AG04449 (cell line): ENCODE measurements at regions of chr2 and their contacts with region 1.

Region 1: DNA sequence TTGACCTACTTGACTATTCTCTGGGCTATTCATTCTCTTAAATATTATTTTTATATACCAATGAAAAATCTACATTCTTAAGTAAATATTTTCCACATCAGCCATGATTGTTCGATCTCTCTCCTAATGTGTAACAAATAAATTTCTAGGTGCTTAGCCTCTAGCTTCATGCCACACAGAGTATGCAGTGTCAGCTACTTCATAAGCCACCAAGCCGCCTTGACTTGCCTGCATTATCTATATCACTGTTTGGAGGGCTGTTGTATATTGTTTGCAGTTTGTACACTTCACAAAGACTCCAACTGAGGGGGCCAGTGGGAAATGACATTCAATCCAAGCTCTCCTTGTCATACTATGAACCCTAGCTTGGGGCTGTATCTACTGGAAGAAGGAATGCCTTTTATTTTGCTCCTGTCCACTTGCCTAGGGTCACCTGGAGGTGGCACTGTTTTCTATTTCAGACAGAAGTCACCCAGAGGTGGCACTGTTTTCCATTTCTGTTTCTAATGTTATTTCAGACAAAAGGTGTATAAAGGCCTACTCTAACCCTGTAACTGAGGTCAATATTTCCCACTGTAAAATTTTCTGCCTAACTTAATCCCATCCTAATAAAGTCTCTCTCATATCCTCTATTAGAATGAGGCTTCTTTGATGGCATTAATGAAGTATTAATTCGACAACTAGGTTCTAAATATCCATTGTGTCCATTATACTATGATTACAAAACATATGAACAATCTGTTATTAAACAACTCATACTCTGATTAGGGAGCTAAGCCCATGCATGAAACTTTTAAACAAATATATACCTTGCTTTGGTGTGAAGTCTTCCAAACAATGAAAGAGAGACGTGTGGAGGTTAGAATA is 36.4 kb downstream of the COL5A2 start:
- DNase-seq: no peak
- H3K4me3 ChIP-seq: no peak overlapping the region
- CTCF ChIP-seq: peak; percentile 17

Region 2: DNA sequence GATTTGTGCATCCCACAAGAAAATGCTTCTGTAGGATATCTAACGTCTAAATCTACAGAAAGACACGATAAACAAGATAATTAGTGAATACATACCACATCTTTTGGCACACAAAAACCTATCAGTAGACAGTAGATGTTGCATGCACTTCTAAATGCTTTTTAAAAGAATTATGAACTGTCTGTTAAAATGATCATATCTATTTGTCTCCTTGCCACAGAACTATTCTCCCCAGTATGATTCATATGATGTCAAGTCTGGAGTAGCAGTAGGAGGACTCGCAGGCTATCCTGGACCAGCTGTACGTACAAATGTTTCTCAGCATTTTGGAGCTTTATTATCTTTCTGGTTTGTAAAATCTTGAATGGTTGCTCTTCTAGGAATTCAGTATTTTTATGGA is 156.3 kb before region 1 on chr2:
- CTCF ChIA-PET with region 1: no interaction called
- POLR2A ChIA-PET with region 1: no interaction called
- DNase-seq: no peak
- H3K4me3 ChIP-seq: no peak overlapping the region
- CTCF ChIP-seq: no peak

Region 3: DNA sequence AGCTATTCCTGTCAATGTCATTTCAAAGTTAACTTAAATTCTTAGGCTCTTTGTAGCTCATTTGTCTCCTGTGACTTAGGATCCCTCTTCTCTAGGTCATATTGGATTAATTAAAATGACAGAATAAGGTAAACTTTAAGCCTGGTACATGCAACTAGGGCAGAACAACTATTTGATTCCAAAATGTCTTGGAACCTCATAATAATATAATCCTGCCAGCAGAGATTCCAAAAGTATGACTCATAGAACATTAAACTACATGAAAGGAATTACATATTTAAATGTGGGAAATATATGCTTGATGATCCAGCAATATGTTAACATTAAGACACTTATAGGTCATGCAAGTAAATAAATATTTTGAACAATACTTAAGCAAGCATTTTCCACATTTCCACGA is 105.6 kb before region 1 on chr2:
- CTCF ChIA-PET with region 1: no interaction called
- POLR2A ChIA-PET with region 1: no interaction called
- DNase-seq: no peak
- H3K4me3 ChIP-seq: no peak overlapping the region
- CTCF ChIP-seq: no peak

Region 4: DNA sequence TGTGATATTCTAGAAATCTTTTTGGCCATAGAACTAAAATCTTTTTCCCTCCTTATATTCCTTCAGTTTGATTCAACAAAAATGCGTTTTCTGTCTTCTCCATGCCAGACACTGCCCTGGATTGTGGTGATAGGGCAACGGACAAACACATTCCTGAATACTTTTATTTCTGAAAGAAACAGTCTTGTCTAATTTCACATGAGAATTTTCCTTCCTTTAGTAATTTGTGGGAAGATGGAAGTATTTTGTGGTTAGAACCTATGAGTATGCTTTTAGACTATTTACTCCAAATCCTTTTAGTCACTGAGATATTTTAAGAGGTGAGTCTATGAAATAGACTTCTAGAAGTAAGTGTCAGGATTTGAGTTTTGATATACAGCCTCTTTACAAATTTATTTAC is 13.2 kb before region 1 on chr2:
- CTCF ChIA-PET with region 1: interaction called, 26 read pairs
- POLR2A ChIA-PET with region 1: no interaction called
- DNase-seq: peak; percentile 77
- H3K4me3 ChIP-seq: no peak overlapping the region
- CTCF ChIP-seq: no peak